Aorta (tissue), 5 donors: ENCODE measurements at regions of chr3 and their contacts with region 1.

Region 1: GRCh38 chr3:54146506-54147239 is 24.3 kb downstream of the CACNA2D3 start:
- DNase-seq: peak; percentile 64 to 80
- ATAC-seq: peak; percentile 73
- H3K4me3 ChIP-seq: no peak overlapping the region
- H3K27ac ChIP-seq: no peak overlapping the region
- H3K4me1 ChIP-seq: no peaks in the 10 kb centered on the region
- H3K27me3 ChIP-seq: no peaks in the 10 kb centered on the region

Region 2: DNA sequence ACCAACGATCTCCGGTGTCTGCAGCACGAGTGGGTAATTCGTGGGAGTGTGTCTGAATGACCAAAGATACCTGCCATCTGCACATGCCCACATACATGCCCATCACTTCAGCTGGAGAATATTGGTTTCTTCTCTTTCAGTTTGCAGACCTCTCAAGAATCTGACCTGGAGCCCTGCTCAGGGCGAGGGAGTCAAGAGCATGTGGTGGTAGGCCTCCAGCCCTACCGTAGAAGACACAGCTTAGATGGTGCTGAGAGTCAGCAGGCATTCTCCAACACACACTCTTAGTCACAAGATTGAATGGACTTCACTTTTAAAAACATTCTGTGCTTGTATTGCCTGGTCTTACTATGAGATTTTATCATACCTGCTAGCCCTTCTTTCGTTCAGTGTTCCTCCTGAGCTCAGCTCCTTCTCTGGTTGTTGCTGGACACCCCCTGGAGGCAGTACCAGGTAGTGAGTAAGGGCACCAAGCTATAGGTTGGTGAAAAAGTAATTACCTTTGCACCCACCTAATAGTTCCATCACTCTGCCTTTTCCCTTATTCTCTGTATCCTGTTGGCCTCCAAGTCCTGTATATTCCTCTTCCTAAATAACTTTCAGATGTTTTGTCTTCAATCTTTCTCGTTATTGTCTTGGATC is 227.7 kb after region 1 on chr3:
- intact Hi-C with region 1: loop called in 1 of 2 experiments (anchors 2 kb)
- DNase-seq: no peak
- ATAC-seq: no peak
- H3K4me3 ChIP-seq: no peak overlapping the region
- H3K27ac ChIP-seq: no peak overlapping the region
- H3K4me1 ChIP-seq: no peaks in the 10 kb centered on the region
- H3K27me3 ChIP-seq: no peaks in the 10 kb centered on the region